Activated naive CD4-positive, alpha-beta T cell treated with anti-CD3 and anti-CD28 coated beads for 36 hours (primary cell): ENCODE measurements at regions of chr17 and their contacts with region 1.

Region 1: GRCh38 chr17:58100506-58100905 is 17.3 kb downstream of the DYNLL2 start:
- DNase-seq: no peak
- H3K4me3 Mint-ChIP-seq: no peak overlapping the region
- H3K27ac Mint-ChIP-seq: no peak overlapping the region
- H3K4me1 Mint-ChIP-seq: peaks cover 4% of the 10 kb centered on the region
- H3K27me3 Mint-ChIP-seq: no peaks in the 10 kb centered on the region

Region 2: DNA sequence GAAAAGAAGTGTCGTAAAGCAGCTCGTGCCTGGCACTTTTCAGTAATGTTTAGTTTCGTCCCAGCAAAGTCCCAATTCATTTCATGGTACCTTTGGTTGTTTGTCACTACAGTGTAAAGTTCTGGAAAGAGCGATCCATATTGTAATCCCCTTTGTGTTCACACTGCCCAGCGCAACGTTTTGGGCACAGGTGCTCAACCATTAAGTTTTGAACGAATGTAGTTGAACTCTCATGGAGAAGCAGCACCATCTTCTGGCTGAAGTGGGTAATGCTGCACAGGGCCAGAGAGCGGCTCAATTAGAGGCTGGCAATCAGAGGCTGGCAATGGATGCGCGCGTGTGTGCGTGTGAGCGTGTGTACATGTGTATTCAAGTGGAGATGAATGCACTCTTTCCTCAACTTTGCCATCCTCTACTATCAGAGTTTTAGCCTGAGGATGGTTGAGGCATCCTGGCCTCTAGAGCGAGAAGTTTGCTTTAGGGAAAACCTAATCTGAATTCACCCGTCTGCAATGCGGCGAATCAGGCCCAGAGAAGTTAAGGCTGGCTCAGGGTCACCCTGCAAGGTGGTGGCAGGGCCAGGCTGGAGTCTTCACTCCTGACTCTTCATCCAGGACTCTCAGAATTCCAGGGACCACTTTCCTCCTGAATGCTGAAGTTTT is 12.6 kb after region 1 on chr17:
- CTCF ChIA-PET with region 1: interaction called, 14 read pairs
- intact Hi-C with region 1: no loop called
- DNase-seq: peak; percentile 94
- H3K4me3 Mint-ChIP-seq: no peak overlapping the region
- H3K27ac Mint-ChIP-seq: no peak overlapping the region
- H3K4me1 Mint-ChIP-seq: no peaks in the 10 kb centered on the region
- H3K27me3 Mint-ChIP-seq: no peaks in the 10 kb centered on the region